ENCODE measurements at regions of chr5 and their contacts with region 1.

Region 1: DNA sequence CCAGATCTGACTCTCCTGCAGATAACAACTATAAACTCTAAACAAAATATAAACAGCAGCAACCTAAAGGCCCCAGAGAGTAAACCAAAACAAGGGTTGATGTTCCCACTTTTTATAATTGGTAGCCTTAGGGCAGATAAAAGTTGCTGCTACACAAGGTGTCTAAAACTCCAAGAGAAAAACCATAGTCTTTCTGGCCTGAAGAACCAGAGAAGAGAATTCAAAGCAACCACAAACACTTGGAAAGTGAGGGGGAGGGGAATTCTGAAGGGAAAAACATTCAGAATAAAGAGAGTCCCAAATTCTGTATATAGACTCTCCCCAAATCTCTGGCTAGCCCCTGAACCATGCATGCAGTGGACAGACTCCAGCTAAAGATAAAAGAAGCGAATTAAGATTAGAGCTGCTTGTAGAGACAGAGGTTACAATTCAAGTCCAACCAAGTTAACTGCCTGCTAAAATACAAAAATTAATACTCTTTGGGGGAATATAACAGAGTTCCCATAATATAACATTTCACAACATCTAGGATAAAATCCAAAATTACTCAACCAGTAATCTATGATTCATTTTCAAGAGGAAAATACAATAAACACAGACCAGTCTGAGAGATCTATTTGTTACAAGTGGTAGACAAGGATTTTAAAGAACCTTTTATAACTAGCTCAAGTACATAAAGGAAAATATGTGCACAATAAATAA is 37.5 kb upstream of the RGMB start:
- DNase-seq: peak; percentile 54
- ATAC-seq: peak; percentile 29; the same call in 1 of the 2 replicates
- H3K4me3 ChIP-seq: no peak overlapping the region
- H3K27ac ChIP-seq: no peak overlapping the region
- H3K4me1 ChIP-seq: peaks cover 9% of the 10 kb centered on the region; the same call in 1 of the 2 replicates
- H3K27me3 ChIP-seq: no peaks in the 10 kb centered on the region
- CTCF ChIP-seq: no peak

Region 2: GRCh38 chr5:97062046-97062445 is 1673.9 kb before region 1 on chr5:
- CTCF ChIA-PET with region 1: interaction called, 11 read pairs
- POLR2A ChIA-PET with region 1: no interaction called
- intact Hi-C with region 1: no loop called
- DNase-seq: no peak
- ATAC-seq: no peak
- H3K4me3 ChIP-seq: no peak overlapping the region
- H3K27ac ChIP-seq: no peak overlapping the region
- H3K4me1 ChIP-seq: no peaks in the 10 kb centered on the region
- H3K27me3 ChIP-seq: peaks cover 3% of the 10 kb centered on the region; the same call in 1 of the 2 replicates
- CTCF ChIP-seq: no peak

Region 3: DNA sequence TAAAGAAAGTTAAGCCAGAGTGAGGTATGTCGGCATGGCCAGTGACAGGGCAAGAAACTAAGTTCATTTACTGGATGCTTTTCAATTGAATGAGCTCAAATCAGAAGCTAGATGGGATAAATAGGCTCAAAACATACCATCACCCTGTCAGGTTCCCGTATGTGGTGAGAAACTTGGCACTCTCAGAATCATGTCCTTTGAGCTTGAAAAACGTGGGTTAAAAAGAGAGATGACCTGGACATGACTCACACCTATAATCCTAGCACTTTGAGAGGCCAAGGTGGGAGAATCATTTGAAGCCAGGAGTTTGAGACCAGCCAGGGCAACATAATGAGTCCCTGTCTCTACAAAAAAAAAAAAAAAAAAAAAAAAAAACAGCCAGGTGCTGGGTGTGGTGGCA is 84.2 kb before region 1 on chr5:
- CTCF ChIA-PET with region 1: no interaction called
- POLR2A ChIA-PET with region 1: interaction called, 12 read pairs
- intact Hi-C with region 1: no loop called
- DNase-seq: peak; percentile 29
- ATAC-seq: no peak
- H3K4me3 ChIP-seq: no peak overlapping the region
- H3K27ac ChIP-seq: no peak overlapping the region
- H3K4me1 ChIP-seq: no peaks in the 10 kb centered on the region
- H3K27me3 ChIP-seq: no peaks in the 10 kb centered on the region
- CTCF ChIP-seq: no peak

Region 4: DNA sequence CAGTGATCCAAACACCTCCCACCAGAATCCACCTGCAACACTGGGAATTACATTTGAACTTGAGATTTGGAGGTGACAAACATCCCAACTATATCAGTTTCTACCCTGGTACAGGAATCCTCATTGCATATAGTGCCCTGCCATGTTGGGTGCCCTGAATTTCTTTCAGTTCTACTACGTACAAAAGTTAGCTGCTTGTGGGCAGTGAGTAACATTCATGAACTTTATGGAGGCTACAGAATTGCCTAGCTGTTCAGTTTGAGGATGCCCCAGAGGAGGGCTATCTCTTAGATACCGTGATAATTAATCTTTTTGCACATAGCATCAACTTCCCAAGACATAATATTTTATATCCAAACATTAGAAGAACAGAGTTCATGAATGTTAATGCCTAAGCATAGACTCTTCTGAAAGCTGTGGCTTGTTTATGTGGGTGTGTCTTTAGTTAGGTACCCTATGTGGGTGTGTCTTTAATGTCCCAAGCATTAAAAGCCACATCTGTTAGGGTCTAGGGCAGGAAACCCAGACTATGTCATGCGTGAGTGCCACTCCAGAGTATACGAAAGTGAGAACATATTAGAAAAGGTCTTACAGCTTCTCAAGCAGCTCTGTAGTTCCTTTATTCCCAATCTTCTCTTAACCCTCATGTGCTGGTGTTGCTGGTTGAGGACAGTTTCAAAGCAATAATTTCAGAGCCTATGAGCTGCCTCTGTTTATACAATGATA is 239.9 kb after region 1 on chr5:
- CTCF ChIA-PET with region 1: no interaction called
- POLR2A ChIA-PET with region 1: no interaction called
- intact Hi-C with region 1: no loop called
- DNase-seq: no peak
- ATAC-seq: no peak
- H3K4me3 ChIP-seq: no peak overlapping the region
- H3K27ac ChIP-seq: no peak overlapping the region
- H3K4me1 ChIP-seq: peaks cover 29% of the 10 kb centered on the region
- H3K27me3 ChIP-seq: no peaks in the 10 kb centered on the region
- CTCF ChIP-seq: no peak